HepG2 (cell line): ENCODE measurements at regions of chr13 and their contacts with region 1.

Region 1: GRCh38 chr13:106567474-106568298 is at the start of gene ARGLU1:
- DNase-seq: peak; percentile 78
- ATAC-seq: peak; percentile 91
- H3K4me3 ChIP-seq: peak within 1 kb of the TSS; percentile 73 to 95 (median 89)
- H3K27ac ChIP-seq: peak within 1 kb of the TSS; percentile 91
- H3K4me1 ChIP-seq: peaks cover 40% of the 10 kb centered on the region
- H3K27me3 ChIP-seq: no peaks in the 10 kb centered on the region; a peak in 1 of 5 replicates
- CTCF ChIP-seq: no peak
- EP300 ChIP-seq: no peak
- POLR2A ChIP-seq: peak; percentile 86 to 87
- RAD21 ChIP-seq: peak; percentile 38
- total RNA-seq, gene ARGLU1: 27.2 and 47.1 TPM in 2 replicates

Region 2: DNA sequence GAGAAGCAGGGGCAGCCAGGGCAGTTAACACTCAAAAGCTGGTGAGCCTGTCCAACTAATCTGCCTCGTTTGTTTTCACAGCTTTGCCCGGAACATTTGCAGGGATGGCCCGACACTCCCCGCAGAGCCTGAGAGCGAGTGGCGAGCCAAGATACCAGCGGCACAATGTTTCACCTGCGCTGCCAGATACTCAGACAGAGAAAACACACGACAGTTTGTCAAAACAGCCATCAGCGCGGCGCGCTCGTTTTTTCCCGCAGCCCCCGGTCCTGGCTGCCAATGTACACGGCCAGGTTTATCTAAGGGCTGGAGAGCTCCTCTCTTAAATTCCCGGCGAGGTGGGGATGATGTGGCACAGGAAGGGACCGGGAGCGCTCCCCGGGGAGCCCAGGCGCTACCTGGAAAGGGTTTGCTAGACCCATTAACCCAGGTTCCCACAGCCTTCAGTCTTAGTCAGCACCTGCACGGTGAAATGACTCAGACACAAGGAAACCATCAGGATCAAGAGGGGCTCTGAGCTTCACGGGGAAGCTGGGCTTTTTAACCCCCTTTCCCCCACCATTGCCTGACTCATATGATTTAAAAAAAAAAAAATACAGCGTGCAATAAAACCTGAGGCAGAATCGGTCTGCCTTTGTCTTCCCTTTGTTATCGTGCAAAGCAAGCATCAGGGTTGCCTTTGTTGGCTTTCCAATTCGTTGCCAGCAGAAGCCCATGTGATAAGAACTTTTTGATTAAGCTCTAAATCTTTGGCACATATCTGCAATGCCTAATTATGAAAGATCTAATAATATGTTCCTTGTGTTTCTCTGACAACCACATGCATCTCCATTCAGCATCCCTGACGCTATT is 218.4 kb before region 1 on chr13:
- CTCF ChIA-PET with region 1: no interaction called
- POLR2A ChIA-PET with region 1: no interaction called
- in situ Hi-C with region 1: no loop called
- intact Hi-C with region 1: no loop called
- DNase-seq: no peak
- ATAC-seq: no peak
- H3K4me3 ChIP-seq: no peak overlapping the region
- H3K27ac ChIP-seq: no peak overlapping the region
- H3K4me1 ChIP-seq: no peaks in the 10 kb centered on the region
- H3K27me3 ChIP-seq: peaks cover 0 to 13% of the 10 kb centered on the region in 2 experiments; a peak in 2 of 5 replicates
- CTCF ChIP-seq: no peak
- EP300 ChIP-seq: no peak
- POLR2A ChIP-seq: no peak
- RAD21 ChIP-seq: no peak

Region 3: DNA sequence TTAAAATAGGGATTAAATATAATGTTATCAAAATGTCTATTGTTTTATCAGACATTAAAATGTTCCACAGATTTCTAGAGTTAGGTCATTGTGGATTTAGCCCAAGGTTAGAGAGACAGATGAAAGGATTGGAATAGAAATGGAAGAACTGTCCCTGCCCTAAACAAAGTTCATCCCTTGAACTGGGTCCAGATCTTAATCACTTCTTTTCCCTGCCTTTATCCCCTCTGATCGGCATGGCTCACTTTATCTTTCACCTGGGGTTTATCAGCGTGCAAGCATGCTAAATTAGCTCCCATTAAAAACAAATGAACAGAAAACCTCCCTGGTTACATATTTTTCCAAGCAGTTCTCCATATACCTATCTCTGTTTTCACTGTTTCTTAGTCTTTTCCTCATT is 23.6 kb after region 1 on chr13:
- CTCF ChIA-PET with region 1: no interaction called
- POLR2A ChIA-PET with region 1: interaction called, 5 read pairs
- in situ Hi-C with region 1: no loop called
- intact Hi-C with region 1: loop called (anchors 1 kb)
- DNase-seq: peak; percentile 66
- ATAC-seq: peak; percentile 91
- H3K4me3 ChIP-seq: no peak overlapping the region
- H3K27ac ChIP-seq: peak overlapping the region; percentile 47
- H3K4me1 ChIP-seq: peaks cover 49% of the 10 kb centered on the region
- H3K27me3 ChIP-seq: no peaks in the 10 kb centered on the region
- CTCF ChIP-seq: no peak
- EP300 ChIP-seq: peak in 1 of 2 experiments; percentile 55; a peak in 2 of 4 replicates
- POLR2A ChIP-seq: no peak
- RAD21 ChIP-seq: no peak

Region 4: DNA sequence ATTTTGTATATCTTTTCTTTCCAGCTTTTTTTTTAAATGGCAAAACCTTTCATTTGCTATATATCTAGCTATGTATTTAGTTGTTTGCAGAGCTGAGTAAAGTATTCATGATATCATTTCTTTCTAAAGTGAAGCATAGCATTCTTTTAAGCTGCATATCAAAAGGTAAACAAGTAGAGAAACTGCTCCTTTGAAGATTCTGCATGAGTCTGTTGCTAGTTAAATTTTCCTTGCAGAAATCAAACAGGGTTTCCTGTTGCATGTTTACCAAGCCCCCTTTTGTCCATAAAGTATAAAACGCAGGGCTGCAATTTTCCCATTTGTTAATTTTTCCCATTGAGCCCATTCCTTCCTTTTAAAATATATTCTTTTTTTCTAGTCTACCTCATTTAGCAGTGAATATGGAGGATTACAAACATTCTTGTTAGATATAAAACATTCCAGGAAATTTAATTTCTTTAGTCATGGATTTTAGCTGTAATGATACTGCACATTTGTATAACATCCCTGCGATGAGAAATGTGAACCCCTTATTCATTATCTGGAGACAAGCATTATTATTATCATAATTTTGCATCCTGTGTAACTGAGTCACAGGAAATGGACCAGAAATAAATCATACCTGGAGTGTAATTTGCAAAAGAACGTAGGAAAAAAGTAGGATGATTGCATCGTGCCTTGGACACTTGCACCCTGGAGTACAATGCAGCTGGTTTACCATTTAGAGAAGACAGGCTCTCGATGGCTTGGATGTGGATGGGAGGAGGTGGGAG is 111.1 kb after region 1 on chr13:
- CTCF ChIA-PET with region 1: no interaction called
- POLR2A ChIA-PET with region 1: no interaction called
- in situ Hi-C with region 1: no loop called
- intact Hi-C with region 1: loop called (anchors 10 kb)
- DNase-seq: no peak
- ATAC-seq: no peak
- H3K4me3 ChIP-seq: no peak overlapping the region
- H3K27ac ChIP-seq: no peak overlapping the region
- H3K4me1 ChIP-seq: peaks cover 38% of the 10 kb centered on the region
- H3K27me3 ChIP-seq: no peaks in the 10 kb centered on the region
- CTCF ChIP-seq: no peak
- EP300 ChIP-seq: peak in 1 of 2 experiments; percentile 36; a peak in 1 of 4 replicates
- POLR2A ChIP-seq: no peak
- RAD21 ChIP-seq: no peak

Region 5: DNA sequence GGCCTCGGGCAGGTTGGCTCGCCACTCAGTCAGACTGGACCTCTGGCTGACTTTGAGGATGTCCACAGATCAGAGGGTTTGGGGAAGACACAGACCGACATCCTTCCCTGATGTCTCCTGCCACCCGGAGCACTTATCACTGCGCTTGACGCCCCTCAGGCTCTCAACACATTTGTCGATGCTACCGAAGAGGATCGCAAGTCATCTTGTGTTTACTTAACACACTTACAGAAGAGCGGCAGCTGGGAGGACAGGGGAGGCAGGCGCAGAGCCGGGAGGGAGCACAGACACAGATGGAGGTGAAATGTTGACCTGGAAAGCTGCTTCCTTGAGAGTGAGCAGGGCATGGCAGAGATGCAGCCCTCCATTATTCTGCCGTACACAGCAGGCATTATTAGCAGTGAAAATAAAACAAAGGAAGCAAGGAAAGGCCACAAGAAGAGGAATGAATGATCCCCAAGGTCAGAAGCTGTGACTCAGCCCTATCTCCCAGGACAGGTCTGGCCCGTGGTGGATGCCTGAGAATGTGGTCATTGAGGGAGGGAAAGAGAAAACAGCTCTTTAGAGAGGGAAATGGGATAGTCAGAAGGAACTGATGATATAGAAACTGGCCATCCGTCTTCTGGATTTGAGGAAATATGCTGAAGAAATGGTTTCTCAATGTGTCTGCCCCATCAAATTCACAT is 549.8 kb after region 1 on chr13:
- CTCF ChIA-PET with region 1: no interaction called
- POLR2A ChIA-PET with region 1: no interaction called
- in situ Hi-C with region 1: no loop called
- intact Hi-C with region 1: loop called (anchors 2 kb)
- DNase-seq: peak; percentile 2
- ATAC-seq: no peak
- H3K4me3 ChIP-seq: no peak overlapping the region
- H3K27ac ChIP-seq: no peak overlapping the region
- H3K4me1 ChIP-seq: peaks cover 45% of the 10 kb centered on the region
- H3K27me3 ChIP-seq: no peaks in the 10 kb centered on the region
- CTCF ChIP-seq: no peak
- EP300 ChIP-seq: no peak
- POLR2A ChIP-seq: no peak
- RAD21 ChIP-seq: no peak